Astrocyte of the cerebellum (primary cell): ENCODE measurements at regions of chr4 and their contacts with region 1.

Region 1: DNA sequence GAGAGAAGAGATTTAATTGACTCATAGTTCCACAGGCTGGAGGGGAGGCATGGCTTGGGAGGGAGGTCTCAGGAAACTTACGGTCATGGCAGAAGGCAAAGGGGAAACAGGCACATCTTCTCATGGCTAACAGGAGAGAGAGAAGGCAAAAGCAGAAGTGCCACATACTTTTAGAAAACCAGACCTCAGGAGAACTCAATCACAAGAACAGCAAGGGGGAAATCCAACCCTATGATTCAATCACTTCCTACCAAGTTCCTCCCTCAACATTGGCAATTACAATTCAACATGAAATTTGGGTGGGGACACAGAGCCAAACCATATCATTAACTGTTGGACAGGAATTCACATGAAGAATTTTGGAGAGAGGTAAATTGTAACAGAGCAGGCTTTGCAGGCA is 485.3 kb upstream of the PITX2 start:
- DNase-seq: peak; percentile 5
- H3K4me3 ChIP-seq: no peak overlapping the region
- CTCF ChIP-seq: no peak

Region 2: DNA sequence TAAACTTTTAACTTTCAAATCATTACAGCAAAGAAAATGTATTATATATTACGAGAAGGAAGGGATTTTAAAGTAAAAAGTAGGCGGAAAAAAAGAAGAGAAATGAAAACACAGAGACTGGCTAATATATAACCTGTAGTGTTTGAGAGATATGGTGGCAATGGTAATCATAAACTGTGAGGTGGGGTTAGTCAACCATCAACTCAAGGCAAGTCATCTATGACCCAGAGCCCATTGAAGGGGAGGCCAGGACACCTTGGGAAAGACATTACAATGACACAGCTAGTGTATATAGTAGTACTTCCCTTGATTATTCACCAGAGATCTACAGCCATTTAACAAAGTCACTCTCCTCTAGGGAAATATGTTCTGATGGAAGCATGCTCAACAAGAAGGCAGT is 61.3 kb before region 1 on chr4:
- in situ Hi-C with region 1: no loop called
- DNase-seq: no peak
- H3K4me3 ChIP-seq: no peak overlapping the region
- CTCF ChIP-seq: no peak

Region 3: DNA sequence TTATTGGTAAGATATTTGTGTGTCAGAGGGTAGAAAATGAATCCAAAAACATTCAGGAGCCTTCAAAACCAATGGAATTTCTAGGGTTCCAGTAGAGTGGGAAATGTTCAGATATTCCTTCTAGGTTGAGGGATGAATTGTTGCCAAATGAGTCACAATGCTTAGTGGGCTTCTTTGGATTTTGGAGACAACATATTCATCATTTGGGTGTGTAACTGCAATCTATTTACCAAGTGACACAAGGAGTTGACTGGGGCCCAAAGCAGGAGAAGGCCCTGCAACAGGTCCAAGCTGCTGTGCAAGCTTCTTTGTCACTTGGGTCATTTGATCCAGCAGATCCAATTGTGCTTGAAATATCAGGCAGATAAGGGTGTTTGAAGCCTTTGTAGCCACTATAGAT is 66.2 kb after region 1 on chr4:
- in situ Hi-C with region 1: loop called (anchors 5 kb)
- DNase-seq: no peak
- H3K4me3 ChIP-seq: no peak overlapping the region
- CTCF ChIP-seq: no peak